ENCODE measurements at regions of chr9 and their contacts with region 1.

Region 1: DNA sequence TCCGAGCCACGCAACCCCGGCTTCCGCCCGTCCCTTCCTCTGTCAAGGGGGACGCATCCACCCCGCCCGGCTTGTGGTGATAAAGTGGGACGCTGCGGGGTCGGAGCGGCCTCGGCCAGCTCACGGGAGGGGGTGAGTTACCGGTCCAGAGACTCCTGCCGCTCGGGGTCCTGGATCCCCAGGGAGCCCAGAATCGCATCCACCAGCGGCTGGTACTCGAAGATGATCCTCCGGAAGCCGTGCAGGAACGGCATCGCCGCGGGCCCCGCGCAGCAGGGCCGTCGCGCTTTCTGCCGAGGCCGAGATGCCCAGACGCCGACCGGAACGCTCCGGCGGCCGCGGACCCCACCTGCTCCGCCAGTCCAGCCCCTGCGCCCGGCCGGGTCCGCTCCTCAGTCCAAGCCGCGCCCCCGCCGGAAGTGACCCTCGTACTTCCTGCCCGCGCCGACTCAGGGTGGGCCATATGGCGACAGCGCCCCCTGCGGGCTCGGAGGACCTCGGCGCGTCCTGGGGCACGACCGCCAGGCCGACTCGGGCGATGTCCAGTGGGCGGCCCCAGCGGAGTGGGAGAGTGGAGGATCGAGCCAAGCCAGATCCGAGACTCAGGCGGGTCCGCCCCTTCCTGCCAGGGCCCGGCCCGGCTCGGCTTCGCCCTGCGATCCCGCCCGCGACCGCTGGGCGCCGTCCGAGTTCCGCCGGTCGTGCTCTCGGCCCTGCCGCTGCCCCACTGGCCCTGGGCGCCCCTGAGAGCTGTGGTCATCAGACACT is at the start of gene ASB6:
- DNase-seq: peak; percentile 100
- ATAC-seq: peak; percentile 97
- H3K4me3 Mint-ChIP-seq: peak within 1 kb of the TSS; percentile 84
- H3K27ac Mint-ChIP-seq: peak within 1 kb of the TSS; percentile 75
- H3K4me1 Mint-ChIP-seq: peaks cover 19% of the 10 kb centered on the region
- H3K27me3 Mint-ChIP-seq: no peaks in the 10 kb centered on the region
- CTCF ChIP-seq: peak; percentile 93
- total RNA-seq, gene ASB6: 18.9 and 20.1 TPM in 2 replicates

Region 2: GRCh38 chr9:129610473-129611301 is 31.2 kb before region 1 on chr9:
- CTCF ChIA-PET with region 1: no interaction called
- POLR2A ChIA-PET with region 1: no interaction called
- intact Hi-C with region 1: loop called (anchors 1 kb)
- DNase-seq: peak; percentile 75
- ATAC-seq: peak; percentile 82
- H3K4me3 Mint-ChIP-seq: peak overlapping the region; percentile 81
- H3K27ac Mint-ChIP-seq: peak overlapping the region; percentile 41
- H3K4me1 Mint-ChIP-seq: peaks cover 24% of the 10 kb centered on the region
- H3K27me3 Mint-ChIP-seq: peaks cover 2% of the 10 kb centered on the region
- CTCF ChIP-seq: peak; percentile 37

Region 3: DNA sequence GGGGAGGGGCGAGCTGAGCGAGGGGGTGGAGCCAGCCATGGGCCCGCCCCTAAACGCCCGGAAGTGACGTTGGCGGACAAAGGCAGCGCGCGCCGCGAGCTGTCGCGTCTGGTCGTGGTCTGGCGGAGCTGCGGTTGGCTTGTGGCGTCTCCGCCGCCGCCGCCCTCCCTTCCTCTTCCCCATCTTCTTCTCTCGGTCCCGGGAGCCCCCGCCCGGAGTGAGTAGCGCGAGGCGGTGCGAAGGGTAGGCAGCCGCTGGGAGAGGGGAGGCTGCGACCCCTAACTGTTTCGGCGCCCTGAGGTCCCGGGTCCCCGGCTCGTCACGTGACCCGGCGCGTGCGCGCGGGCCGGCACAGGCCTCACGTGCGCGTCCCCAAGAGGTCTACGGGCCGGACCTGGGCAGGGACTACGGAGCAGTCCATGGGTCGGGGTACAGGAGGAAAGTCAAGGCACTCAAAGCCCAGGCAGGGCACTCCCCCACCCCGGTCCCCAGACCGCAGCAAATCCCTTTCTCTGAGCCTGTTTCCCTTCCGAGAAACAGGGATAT is 15.8 kb before region 1 on chr9 and contains the start of gene NTMT1:
- CTCF ChIA-PET with region 1: interaction called, 5 read pairs
- POLR2A ChIA-PET with region 1: interaction called, 6 read pairs
- intact Hi-C with region 1: loop called (anchors 1 kb)
- DNase-seq: peak; percentile 92
- ATAC-seq: peak; percentile 81
- H3K4me3 Mint-ChIP-seq: peak within 1 kb of the TSS; percentile 89
- H3K27ac Mint-ChIP-seq: peak within 1 kb of the TSS; percentile 88
- H3K4me1 Mint-ChIP-seq: peaks cover 54% of the 10 kb centered on the region
- H3K27me3 Mint-ChIP-seq: peaks cover 7% of the 10 kb centered on the region
- CTCF ChIP-seq: no peak
- total RNA-seq, gene NTMT1: 33.1 and 40.1 TPM in 2 replicates

Region 4: DNA sequence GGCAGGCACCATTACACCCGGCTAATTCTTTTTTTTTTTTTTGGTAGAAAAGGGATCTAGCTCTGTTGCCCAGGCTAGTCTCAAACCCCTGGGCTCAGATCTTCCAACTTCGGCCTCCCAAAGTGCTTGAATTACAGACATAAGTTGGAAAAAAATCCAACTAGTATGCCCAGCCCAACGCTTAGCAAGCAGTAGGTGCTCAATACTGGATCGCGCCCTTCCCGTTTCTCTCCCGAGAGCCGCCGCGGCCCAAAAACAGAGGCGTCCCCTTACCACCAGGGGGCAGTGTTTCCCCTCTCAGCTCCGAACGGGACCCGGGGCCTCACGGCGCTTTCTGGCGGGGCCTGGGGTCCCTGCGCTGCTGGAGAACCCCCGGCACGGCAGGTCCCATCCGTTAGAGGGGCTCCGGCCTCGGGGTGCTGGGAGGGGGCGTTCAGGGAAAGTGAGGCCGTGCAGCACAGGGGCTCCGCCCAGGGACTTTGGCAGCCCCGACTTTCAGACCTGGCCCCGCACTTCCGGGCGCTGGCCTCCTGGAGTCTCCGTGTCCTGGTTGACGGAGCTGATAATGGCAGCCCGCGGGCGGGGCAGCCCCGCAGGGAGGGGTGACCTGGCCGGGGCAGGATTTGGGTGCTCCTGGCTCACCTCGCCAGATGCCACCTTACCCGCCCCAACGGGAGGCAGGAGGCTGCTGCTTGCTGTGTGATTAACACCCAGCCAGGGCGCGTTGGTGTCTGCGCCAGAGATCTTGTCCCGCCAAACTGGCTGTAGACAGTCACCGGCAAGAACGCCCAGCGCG is 95.7 kb after region 1 on chr9:
- CTCF ChIA-PET with region 1: interaction called, 3 read pairs
- POLR2A ChIA-PET with region 1: no interaction called
- intact Hi-C with region 1: loop called (anchors 2 kb)
- DNase-seq: peak; percentile 81
- ATAC-seq: peak; percentile 91
- H3K4me3 Mint-ChIP-seq: peak overlapping the region; percentile 70
- H3K27ac Mint-ChIP-seq: no peak overlapping the region
- H3K4me1 Mint-ChIP-seq: peaks cover 10% of the 10 kb centered on the region
- H3K27me3 Mint-ChIP-seq: peaks cover 6% of the 10 kb centered on the region
- CTCF ChIP-seq: peak; percentile 82

Region 5: GRCh38 chr9:129783516-129784361 is 141.8 kb after region 1 on chr9:
- CTCF ChIA-PET with region 1: no interaction called
- POLR2A ChIA-PET with region 1: no interaction called
- intact Hi-C with region 1: loop called (anchors 1 kb)
- DNase-seq: peak; percentile 46
- ATAC-seq: peak; percentile 98
- H3K4me3 Mint-ChIP-seq: no peak overlapping the region
- H3K27ac Mint-ChIP-seq: no peak overlapping the region
- H3K4me1 Mint-ChIP-seq: peaks cover 3% of the 10 kb centered on the region
- H3K27me3 Mint-ChIP-seq: peaks cover 15% of the 10 kb centered on the region
- CTCF ChIP-seq: peak; percentile 74

Region 6: DNA sequence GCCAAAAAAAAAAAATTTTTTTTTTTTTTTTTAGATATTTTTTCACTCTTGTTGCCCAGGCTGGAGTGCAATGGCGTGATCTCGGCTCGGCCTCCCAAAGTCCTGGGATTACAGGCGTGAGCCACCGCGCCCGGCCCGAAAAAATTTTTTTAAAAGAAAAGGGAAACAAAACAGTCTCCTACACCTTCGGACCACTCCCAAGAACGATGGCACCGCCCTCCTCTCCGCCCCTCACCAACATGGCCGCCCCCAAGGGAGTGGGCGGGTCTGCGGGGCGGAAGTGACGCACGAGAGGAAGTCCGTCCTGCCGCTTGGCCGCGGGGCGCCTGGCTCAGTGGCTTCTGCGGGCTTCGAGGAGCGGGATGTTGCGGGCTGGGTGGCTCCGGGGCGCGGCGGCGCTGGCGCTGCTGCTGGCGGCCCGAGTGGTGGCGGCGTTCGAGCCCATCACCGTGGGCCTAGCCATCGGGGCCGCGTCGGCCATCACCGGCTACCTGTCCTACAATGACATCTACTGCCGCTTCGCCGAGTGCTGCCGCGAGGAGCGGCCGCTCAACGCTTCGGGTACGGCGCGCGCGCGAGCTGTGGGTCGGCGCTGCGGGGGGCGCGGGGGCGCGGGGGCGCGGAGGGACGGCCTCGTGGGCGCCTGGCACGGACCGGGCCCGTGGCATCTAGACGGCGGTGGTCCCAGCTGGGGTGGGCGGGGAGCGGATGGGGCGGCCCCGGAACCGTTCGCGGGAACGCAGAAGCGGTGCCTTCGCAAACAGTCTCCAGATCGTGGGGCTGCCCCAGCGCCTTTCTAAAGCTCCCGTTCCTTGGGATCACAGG is 161.1 kb after region 1 on chr9 and contains the start of gene TOR1B:
- CTCF ChIA-PET with region 1: no interaction called
- POLR2A ChIA-PET with region 1: no interaction called
- intact Hi-C with region 1: loop called (anchors 1 kb)
- DNase-seq: peak; percentile 99
- ATAC-seq: peak; percentile 95
- H3K4me3 Mint-ChIP-seq: peak within 1 kb of the TSS; percentile 92
- H3K27ac Mint-ChIP-seq: peak within 1 kb of the TSS; percentile 93
- H3K4me1 Mint-ChIP-seq: peaks cover 22% of the 10 kb centered on the region
- H3K27me3 Mint-ChIP-seq: no peaks in the 10 kb centered on the region
- CTCF ChIP-seq: no peak
- total RNA-seq, gene TOR1B: 11.8 and 15.3 TPM in 2 replicates

Region 7: GRCh38 chr9:129823935-129824601 is 182.1 kb after region 1 on chr9 and contains the start of gene TOR1A:
- CTCF ChIA-PET with region 1: no interaction called
- POLR2A ChIA-PET with region 1: no interaction called
- intact Hi-C with region 1: loop called (anchors 1 kb)
- DNase-seq: peak; percentile 84
- ATAC-seq: peak; percentile 92
- H3K4me3 Mint-ChIP-seq: peak within 1 kb of the TSS; percentile 85
- H3K27ac Mint-ChIP-seq: peak within 1 kb of the TSS; percentile 76
- H3K4me1 Mint-ChIP-seq: peaks cover 13% of the 10 kb centered on the region
- H3K27me3 Mint-ChIP-seq: no peaks in the 10 kb centered on the region
- CTCF ChIP-seq: no peak
- total RNA-seq, gene TOR1A: 28.5 and 29.5 TPM in 2 replicates

Region 8: DNA sequence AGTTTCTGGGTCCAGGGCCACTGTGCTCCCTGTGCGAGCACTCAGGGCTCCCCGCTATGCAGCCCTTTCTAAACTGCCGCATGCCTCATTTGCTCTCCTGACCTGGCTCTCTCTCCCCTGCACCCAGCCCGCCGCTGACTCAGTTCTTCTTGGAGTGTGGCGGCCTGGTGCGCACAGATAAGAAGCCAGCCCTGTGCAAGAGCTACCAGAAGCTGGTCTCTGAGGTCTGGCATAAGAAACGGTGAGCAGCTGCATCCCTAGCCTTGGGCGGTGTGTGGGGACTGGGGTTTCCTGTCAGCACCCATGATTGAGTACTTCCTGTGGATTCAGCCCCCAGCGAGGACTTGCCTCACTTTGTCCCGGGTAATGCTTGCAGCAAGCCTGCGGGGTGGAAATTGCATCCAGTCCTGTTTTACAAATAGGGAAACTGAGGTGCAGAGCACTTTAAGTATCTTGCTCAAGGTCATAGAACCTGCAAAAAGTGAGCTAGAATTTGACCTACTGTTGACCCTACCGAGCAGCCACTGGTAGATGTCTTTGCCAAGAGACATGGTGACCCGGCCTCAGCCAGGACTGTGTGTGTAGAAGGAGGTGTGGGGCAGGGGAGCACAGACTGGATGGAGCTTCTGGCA is 221.2 kb after region 1 on chr9:
- CTCF ChIA-PET with region 1: no interaction called
- POLR2A ChIA-PET with region 1: no interaction called
- intact Hi-C with region 1: no loop called
- DNase-seq: no peak
- ATAC-seq: no peak
- H3K4me3 Mint-ChIP-seq: no peak overlapping the region
- H3K27ac Mint-ChIP-seq: no peak overlapping the region
- H3K4me1 Mint-ChIP-seq: peaks cover 12% of the 10 kb centered on the region
- H3K27me3 Mint-ChIP-seq: no peaks in the 10 kb centered on the region
- CTCF ChIP-seq: no peak